HEK293T (cell line): ENCODE measurements at regions of chr5 and their contacts with region 1.

Region 1: DNA sequence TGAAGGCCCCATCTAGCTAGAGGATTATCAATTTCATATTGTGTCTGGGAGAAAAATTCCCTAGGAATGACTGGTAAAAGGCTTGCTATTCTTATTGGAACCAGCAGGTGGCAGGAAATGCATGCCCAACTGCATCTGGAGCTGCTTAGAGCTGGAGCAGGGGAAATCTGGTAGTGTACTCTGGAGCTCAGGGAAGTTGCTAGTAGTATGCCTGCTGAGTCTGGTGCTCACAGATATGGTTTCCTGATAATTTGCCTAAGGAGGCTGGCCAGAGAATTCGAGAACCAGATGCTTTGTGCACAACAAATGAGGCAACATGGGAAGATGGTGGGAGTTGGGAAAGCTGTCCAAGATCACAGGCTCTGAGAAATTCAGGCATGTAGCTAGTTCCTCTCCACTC is 53.7 kb downstream of the G3BP1 start:
- DNase-seq: peak; percentile 71

Region 2: DNA sequence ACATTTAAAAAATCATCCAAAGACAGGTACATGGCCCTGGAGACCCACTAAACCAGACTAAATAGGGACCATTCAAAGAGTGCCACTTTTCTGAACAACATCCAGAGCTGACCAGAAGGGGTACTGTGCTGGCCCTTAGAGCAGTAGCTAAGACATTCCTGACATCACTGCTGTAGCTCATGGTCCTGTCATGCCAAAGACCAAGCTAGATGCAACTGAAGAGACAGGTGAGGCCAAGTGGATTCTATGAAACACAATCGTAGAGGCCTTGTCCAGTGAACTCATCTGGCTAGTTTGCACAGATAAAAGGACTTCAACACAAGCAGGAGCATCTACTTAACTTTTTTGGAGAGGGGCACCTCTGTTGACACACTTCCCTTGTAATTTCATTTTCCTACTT is 10.4 kb before region 1 on chr5:
- CTCF ChIA-PET with region 1: interaction called, 15 read pairs
- POLR2A ChIA-PET with region 1: no interaction called
- DNase-seq: no peak

Region 3: GRCh38 chr5:152142840-152143469 is 317.5 kb after region 1 on chr5:
- CTCF ChIA-PET with region 1: interaction called, 37 read pairs
- POLR2A ChIA-PET with region 1: no interaction called
- DNase-seq: peak; percentile 74

Region 4: GRCh38 chr5:152349683-152350526 is 524.5 kb after region 1 on chr5:
- CTCF ChIA-PET with region 1: interaction called, 13 read pairs
- POLR2A ChIA-PET with region 1: no interaction called
- DNase-seq: peak; percentile 50